Activated CD8-positive, alpha-beta memory T cell treated with anti-CD3 and anti-CD28 coated beads, Interleukin-2, amount 10 ng/mL, durations not matched to agents 7 days and 5 days (primary cell): ENCODE measurements at regions of chr2 and their contacts with region 1.

Region 1: GRCh38 chr2:45578056-45578809 is 32.8 kb downstream of the SRBD1 start:
- DNase-seq: no peak
- ATAC-seq: peak; percentile 72
- H3K4me3 Mint-ChIP-seq: no peak overlapping the region
- H3K27ac Mint-ChIP-seq: no peak overlapping the region
- H3K4me1 Mint-ChIP-seq: peaks cover 4% of the 10 kb centered on the region
- H3K27me3 Mint-ChIP-seq: no peaks in the 10 kb centered on the region

Region 2: GRCh38 chr2:45559436-45559835 is 18.8 kb before region 1 on chr2:
- CTCF ChIA-PET with region 1: no interaction called
- DNase-seq: no peak
- ATAC-seq: no peak
- H3K4me3 Mint-ChIP-seq: no peak overlapping the region
- H3K27ac Mint-ChIP-seq: no peak overlapping the region
- H3K4me1 Mint-ChIP-seq: peaks cover 27% of the 10 kb centered on the region
- H3K27me3 Mint-ChIP-seq: no peaks in the 10 kb centered on the region

Region 3: DNA sequence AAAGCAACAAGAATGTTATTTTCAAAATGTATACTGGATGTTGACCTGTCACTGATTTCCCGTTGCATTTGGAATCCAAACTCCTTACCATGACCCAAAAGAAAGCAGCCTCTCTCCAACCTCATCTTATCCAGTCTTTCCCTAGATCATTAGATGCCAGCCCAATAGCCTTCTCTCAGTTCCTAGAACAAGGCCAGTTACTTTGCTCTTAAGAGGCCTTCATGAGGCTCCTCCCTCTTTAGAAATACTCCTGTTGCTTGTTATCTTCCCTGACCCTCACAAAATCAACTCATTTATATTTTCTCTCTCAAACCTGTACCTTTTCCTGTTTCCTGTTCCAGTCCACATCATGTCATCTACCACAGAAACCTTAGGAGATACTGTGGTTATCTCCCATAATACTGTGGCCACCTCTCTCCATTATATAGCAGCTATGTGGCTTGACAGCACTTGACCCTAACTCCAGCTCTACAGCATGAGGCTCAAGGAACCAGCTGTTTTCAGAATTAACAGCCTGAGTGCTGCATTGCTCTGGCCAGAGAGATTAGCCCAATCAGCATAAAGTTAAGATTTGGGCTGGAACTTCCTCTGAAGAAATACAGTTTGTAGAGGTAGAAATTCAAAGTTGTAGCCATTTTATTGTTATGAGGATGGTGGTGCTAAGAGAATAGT is 10.1 kb after region 1 on chr2:
- CTCF ChIA-PET with region 1: interaction called, 17 read pairs
- DNase-seq: no peak
- ATAC-seq: peak; percentile 33
- H3K4me3 Mint-ChIP-seq: no peak overlapping the region
- H3K27ac Mint-ChIP-seq: peak overlapping the region; percentile 2
- H3K4me1 Mint-ChIP-seq: peaks cover 22% of the 10 kb centered on the region
- H3K27me3 Mint-ChIP-seq: no peaks in the 10 kb centered on the region